Posterior vena cava (tissue), 2 donors: ENCODE measurements at regions of chr11 and their contacts with region 1.

Region 1: GRCh38 chr11:47938791-47939560 is 41.4 kb upstream of the PTPRJ start:
- DNase-seq: no peak

Region 2: GRCh38 chr11:47886096-47886495 is 52.9 kb before region 1 on chr11:
- intact Hi-C with region 1: no loop called
- DNase-seq: no peak

Region 3: GRCh38 chr11:48006301-48006992 is 67.5 kb after region 1 on chr11:
- intact Hi-C with region 1: loop called in 1 of 2 experiments (anchors 1 kb)
- DNase-seq: no peak